Transverse colon (tissue), 4 donors: ENCODE measurements at regions of chr9 and their contacts with region 1.

Region 1: GRCh38 chr9:75265525-75265972 is 177.2 kb downstream of the OSTF1 start:
- DNase-seq: peak; percentile 54
- H3K4me3 ChIP-seq: no peak overlapping the region
- H3K27ac ChIP-seq: no peak overlapping the region
- H3K4me1 ChIP-seq: peaks cover 0 to 15% (median 6%) of the 10 kb centered on the region in 4 donors
- H3K27me3 ChIP-seq: no peaks in the 10 kb centered on the region
- CTCF ChIP-seq: peak; percentile 86 to 93 (median 89)
- EP300 ChIP-seq: no peak
- POLR2A ChIP-seq: no peak

Region 2: DNA sequence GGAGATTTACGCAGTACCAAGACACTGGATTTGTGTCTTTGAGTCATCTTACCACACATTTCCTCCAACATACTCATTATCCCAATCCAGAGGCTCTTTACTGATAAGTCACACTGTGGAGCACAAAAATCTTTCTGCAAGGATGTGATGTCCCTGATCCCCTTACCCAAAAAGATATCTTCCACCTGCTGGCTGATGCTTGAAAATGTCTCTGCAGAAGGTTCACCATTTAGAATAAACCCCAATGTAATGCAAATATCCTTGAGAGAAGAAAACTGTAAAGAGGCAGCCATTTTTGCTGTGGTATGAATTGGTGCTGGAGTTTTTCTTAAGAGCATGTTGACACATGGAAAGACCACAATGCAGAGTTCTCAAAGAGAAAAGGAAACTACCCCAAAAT is 834.1 kb before region 1 on chr9:
- in situ Hi-C with region 1: no loop called
- intact Hi-C with region 1: no loop called
- DNase-seq: no peak
- H3K4me3 ChIP-seq: no peak overlapping the region
- H3K27ac ChIP-seq: no peak overlapping the region
- H3K4me1 ChIP-seq: no peaks in the 10 kb centered on the region
- H3K27me3 ChIP-seq: no peaks in the 10 kb centered on the region
- CTCF ChIP-seq: no peak
- EP300 ChIP-seq: no peak
- POLR2A ChIP-seq: no peak

Region 3: DNA sequence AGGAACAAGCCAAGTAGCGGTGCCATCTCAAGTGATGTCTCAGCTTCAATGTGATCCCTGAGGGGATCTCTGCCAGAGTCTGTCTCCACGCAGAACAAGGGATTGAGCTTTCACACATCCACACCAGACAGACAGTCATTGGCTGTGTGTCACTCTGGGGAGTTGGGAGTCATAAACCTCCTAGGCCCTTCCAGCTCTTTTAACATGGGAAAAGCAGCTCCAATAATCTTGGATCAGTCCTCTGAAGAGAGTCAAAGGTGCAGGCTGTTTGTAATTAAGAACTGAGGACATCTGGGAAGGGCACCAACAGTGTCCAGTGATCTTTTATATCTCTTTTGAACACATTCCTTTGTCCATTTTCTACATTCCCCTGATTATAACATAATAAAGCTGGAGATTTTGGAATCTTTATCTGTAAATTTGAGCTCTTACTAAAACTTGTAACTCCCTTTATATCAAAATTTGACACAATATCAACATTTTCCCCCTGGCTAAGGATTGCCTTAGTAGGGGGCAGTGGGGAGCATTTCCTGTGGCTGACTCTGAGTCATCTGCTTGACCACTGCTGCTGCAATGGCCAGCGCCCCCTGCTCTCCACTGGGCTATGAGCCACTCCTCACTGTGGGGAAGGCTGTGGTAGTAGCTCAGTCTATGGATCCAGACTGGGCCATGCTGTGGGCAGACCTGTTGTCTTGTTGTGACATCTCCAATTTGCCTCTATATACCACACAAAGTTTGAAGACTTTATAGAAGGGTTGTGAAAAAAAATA is 107.1 kb after region 1 on chr9:
- in situ Hi-C with region 1: no loop called
- intact Hi-C with region 1: no loop called
- DNase-seq: no peak
- H3K4me3 ChIP-seq: no peak overlapping the region
- H3K27ac ChIP-seq: no peak overlapping the region
- H3K4me1 ChIP-seq: no peaks in the 10 kb centered on the region
- H3K27me3 ChIP-seq: no peaks in the 10 kb centered on the region
- CTCF ChIP-seq: no peak
- EP300 ChIP-seq: no peak
- POLR2A ChIP-seq: no peak

Region 4: GRCh38 chr9:75855509-75855908 is 590.0 kb after region 1 on chr9:
- in situ Hi-C with region 1: loop called (anchors 10 to 25 kb)
- intact Hi-C with region 1: loop called (anchors 10 kb)
- DNase-seq: peak; percentile 18
- H3K4me3 ChIP-seq: no peak overlapping the region
- H3K27ac ChIP-seq: no peak overlapping the region
- H3K4me1 ChIP-seq: no peaks in the 10 kb centered on the region
- H3K27me3 ChIP-seq: no peaks in the 10 kb centered on the region
- CTCF ChIP-seq: peak; percentile 27 to 53 (median 41)
- EP300 ChIP-seq: no peak
- POLR2A ChIP-seq: no peak

Region 5: DNA sequence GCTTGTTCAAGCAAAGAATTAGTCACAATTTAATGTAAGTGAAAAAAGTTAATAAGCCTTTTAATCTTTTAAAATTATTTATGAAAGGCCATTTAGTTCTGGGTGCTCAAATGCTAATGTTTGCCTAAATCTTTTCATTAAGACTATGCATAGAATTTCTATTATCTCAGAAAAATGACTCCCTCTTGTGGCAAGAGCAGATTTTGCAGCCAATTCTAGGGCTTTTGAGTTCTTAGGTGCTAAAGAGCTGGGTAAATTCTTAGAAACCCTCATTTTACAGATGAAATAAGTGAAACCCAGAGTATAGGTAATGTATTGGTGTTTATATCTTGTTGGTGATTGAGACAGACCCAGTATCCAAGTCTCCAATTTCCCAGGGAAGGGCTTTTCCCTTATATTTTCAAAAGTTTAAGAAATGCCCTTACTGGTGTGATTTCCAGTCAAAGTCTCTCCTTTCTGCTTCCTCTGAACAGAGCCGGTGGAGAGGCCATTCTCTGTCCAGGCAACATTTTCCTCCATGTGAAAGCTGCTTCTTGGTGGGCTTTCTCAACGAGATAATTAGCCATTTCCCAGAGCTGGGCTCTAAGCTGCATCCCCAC is 600.8 kb after region 1 on chr9:
- in situ Hi-C with region 1: loop called in 2 of 4 experiments (anchors 25 kb)
- intact Hi-C with region 1: loop called (anchors 10 kb)
- DNase-seq: peak; percentile 52
- H3K4me3 ChIP-seq: no peak overlapping the region
- H3K27ac ChIP-seq: no peak overlapping the region
- H3K4me1 ChIP-seq: peaks cover 0 to 5% (median 4%) of the 10 kb centered on the region in 4 donors
- H3K27me3 ChIP-seq: no peaks in the 10 kb centered on the region
- CTCF ChIP-seq: peak; percentile 69 to 81 (median 79)
- EP300 ChIP-seq: no peak
- POLR2A ChIP-seq: no peak

Region 6: GRCh38 chr9:76297721-76298239 is 1032.2 kb after region 1 on chr9:
- in situ Hi-C with region 1: loop called in 1 of 4 experiments (anchors 25 kb)
- intact Hi-C with region 1: loop called (anchors 10 kb)
- DNase-seq: no peak
- H3K4me3 ChIP-seq: no peak overlapping the region
- H3K27ac ChIP-seq: peak overlapping the region; percentile 39 to 61 (median 52)
- H3K4me1 ChIP-seq: peaks cover 0 to 9% (median 5%) of the 10 kb centered on the region in 4 donors
- H3K27me3 ChIP-seq: no peaks in the 10 kb centered on the region
- CTCF ChIP-seq: no peak
- EP300 ChIP-seq: no peak
- POLR2A ChIP-seq: no peak

Region 7: DNA sequence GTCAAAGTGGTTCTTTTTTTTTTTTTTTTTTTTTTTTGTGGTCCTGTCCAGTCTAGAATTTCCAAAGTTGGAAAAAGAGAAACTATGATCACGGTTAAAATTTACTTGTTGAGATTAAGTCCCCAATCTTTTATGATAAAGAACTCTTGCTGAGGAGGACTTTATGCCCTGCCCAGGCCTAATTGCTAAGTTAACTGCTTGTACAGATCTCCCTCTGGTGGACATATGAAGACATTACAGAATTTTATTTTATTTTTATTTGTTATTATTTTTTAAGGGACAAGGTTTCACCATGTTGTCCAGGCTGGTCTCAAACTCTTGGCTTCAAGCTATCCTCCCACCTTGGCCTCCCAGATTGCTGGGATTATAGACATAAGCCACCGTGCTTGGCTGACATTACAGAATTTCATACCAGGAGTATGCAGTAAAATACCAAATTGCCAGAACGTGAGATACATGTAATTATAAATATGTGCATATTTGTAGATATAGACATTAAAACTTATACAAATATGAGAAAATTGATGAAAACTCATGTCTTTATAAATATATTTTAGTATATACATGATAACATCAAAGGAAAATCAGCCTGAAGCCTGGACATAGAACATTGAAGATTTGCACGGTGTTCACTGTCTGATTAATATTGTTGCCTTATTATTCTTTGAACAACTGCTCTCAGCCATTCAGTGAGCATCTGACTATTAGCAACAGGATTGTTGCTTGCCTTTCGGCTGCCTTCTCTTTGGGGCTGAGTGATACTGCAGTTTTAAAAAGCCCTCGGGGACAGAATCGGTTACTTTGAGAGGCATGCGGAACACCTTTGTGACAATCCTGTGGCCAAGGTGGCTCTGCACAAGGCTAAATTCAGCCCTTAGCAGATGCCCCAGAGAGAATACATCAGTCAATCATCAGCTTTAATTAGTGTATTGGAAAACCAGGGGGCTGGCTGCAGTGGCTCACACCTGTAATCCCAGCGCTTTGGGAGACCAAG is 1037.7 kb after region 1 on chr9:
- in situ Hi-C with region 1: loop called in 1 of 4 experiments (anchors 25 kb)
- intact Hi-C with region 1: loop called (anchors 10 kb)
- DNase-seq: no peak
- H3K4me3 ChIP-seq: no peak overlapping the region
- H3K27ac ChIP-seq: no peak overlapping the region
- H3K4me1 ChIP-seq: peaks cover 0 to 21% (median 5%) of the 10 kb centered on the region in 4 donors
- H3K27me3 ChIP-seq: peaks cover 4% of the 10 kb centered on the region
- CTCF ChIP-seq: peak; percentile 71 to 83 (median 78)
- EP300 ChIP-seq: no peak
- POLR2A ChIP-seq: no peak

Region 8: DNA sequence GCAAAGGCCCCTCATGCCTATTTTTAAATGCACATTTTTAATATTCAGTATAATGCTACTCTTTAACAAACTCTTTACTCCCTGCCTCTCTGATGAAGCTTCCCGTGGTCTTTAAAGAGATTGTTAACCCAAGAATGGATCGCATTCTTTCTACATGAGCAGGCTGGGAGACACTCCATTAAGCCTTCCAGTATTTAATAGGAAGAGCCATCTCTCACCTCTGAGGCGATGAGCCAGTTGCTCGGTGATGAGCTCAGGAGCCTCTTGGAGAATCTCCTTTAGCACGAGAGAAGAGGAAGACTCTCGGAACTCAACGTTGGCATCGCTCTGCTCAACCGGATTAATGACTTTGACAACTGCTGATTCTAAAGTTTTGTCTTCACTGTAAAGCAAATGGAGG is 1580.7 kb after region 1 on chr9:
- in situ Hi-C with region 1: no loop called
- intact Hi-C with region 1: no loop called
- DNase-seq: no peak
- H3K4me3 ChIP-seq: no peak overlapping the region
- H3K27ac ChIP-seq: peak overlapping the region; percentile 42 to 70 (median 68)
- H3K4me1 ChIP-seq: peaks cover 0 to 5% (median 0%) of the 10 kb centered on the region in 4 donors
- H3K27me3 ChIP-seq: peaks cover 3% of the 10 kb centered on the region
- CTCF ChIP-seq: no peak
- EP300 ChIP-seq: no peak
- POLR2A ChIP-seq: no peak